ENCODE measurements at regions of chr18 and their contacts with region 1.

Region 1: DNA sequence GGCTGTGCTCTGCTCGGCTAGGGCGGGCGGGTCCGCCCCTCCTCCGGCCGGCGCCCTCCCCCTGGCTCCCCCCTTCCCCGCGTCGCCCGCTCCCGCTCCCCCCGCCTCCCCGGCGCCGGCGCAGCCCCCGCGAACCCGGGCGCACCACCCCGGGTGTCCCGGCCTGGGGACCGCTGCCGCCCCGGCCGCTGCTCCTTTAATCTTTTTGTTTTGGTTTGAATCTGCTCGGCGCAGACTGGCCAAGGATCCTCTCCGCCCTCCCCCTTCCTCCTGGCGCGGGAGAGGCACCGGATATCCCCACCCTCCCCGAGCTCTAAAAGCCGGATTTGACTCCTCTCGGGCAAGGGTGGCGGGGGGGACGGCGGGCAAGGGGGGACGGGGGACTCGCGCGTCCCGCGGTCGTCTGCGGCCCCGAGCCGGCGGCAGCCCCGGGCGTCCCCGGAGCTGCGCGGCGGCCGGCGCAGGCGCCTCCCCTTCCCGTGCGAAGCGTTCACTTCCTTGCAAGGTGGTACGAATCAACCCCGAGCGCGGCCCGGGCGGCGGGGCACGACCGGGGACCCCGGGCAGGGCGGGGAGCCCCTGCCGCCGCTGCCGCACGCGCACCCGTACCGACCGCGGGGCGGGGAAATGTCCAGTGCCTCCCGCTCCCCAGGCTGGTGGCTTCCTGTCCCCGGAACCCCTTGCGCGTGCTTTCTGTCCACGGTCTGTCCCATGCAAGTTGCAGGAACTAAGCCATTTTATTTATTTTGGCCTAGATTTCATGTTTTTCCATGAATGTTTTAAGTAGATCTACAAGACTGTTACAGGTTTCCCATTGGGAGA is at the start of gene PTGR3:
- DNase-seq: peak; percentile 82 to 89
- ATAC-seq: peak; percentile 51 to 65
- H3K4me3 ChIP-seq: peak within 1 kb of the TSS; percentile 75 to 97 (median 87)
- H3K27ac ChIP-seq: peak within 1 kb of the TSS; percentile 95 to 99 (median 96)
- H3K4me1 ChIP-seq: peaks cover 48% of the 10 kb centered on the region in 2 donors
- H3K27me3 ChIP-seq: no peaks in the 10 kb centered on the region
- CTCF ChIP-seq: no peak
- POLR2A ChIP-seq: peak; percentile 60 to 75
- total RNA-seq, gene PTGR3: 25.7 to 34.0 (median 29.9) TPM

Region 2: DNA sequence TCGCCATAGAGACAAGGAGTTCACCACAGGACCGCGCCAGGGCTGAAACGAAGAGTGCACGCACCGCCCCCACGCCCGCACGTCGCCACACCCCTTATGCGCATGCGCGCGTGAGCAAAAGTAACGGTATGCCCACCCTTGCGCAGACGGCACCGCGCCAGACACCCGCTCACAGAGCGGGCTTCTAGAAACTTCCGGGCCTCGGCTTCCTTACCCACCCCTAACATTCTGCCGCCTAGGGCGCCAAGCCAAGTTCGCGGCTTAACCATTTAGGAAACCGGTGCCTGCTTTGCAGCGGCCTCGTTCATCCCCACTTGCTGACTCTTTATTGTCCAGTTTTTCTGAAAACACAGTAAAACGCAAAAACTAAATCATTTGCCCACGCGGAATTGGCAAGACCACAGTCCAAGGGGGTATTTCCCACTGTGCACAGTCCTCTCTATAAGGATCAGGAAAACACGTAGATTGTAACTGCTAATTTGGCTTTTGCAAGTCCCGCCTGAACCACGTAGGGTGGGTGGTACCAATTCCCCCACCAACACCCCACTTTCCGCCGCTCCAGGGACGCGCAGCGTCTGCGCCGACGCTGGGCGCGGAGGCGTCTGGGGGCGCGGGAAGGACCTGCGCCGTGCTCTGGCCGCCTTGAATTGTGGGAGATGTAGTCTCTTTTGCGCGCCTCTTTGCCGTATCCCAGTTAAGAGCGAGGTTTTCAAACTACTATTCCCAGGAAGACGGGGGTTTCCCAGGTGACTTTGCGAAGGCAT is 1061.4 kb before region 1 on chr18 and contains the starts of genes FBXO15 and TIMM21:
- in situ Hi-C with region 1: no loop called
- intact Hi-C with region 1: loop called (anchors 10 kb)
- DNase-seq: peak; percentile 94 to 97
- ATAC-seq: peak; percentile 97 to 98
- H3K4me3 ChIP-seq: peak within 1 kb of the TSS; percentile 63 to 95 (median 81)
- H3K27ac ChIP-seq: peak within 1 kb of the TSS; percentile 89 to 94 (median 92)
- H3K4me1 ChIP-seq: peaks cover 30 to 45% of the 10 kb centered on the region in 2 donors
- H3K27me3 ChIP-seq: no peaks in the 10 kb centered on the region
- CTCF ChIP-seq: no peak
- POLR2A ChIP-seq: peak; percentile 79 to 85
- total RNA-seq, gene FBXO15: not detected
- total RNA-seq, gene TIMM21: 40.0 to 108 (median 75.8) TPM

Region 3: DNA sequence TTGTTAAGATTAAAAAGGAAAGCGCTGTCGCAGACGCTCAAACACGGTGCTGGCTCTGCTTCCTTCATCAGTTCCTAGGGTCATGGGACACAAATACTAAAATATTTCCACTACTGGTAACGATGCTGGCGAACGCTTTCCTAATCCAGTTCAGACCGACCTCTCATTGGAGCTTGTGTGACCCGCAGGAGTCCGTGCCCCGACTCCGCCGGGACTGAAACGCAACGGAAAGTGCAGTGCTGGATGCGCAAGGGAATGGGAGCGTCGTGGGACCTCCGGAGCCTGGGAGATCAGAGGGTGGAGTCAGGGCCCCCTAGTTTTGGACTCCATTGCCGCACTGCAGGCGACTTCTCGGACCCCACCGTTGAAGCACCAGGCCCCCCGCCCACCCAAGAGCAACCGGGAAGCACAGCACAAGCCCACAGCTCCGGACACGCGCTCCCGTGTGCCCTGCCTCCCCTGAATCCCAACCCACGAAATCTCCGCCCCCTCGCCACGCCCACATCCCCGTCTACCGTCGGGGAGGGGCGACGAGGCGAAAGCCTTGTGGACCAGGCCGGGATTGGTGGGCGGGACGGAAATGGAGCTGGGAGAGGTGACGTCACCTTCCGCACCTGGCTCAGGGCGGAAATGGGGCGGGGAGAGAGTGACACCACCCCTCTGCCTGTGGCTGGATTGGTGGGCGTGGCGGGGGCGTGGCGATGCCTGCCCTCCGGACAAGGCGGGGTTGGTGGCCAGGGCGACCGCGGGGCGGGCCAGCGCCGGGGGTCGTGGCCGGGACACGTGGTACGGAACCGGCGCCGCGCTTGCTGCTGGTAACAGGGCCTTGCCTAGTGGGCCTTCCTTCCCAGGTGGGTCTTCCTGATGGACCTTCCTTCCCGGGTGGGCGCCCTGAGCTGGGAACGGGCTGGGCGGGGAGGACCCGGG is 713.5 kb before region 1 on chr18 and contains the start of gene CNDP2:
- in situ Hi-C with region 1: no loop called
- intact Hi-C with region 1: loop called (anchors 2 kb)
- DNase-seq: peak; percentile 99
- ATAC-seq: peak; percentile 97 to 99
- H3K4me3 ChIP-seq: peak within 1 kb of the TSS; percentile 68 to 96 (median 82)
- H3K27ac ChIP-seq: peak within 1 kb of the TSS; percentile 78 to 90 (median 88)
- H3K4me1 ChIP-seq: peaks cover 9 to 13% of the 10 kb centered on the region in 2 donors
- H3K27me3 ChIP-seq: no peaks in the 10 kb centered on the region
- CTCF ChIP-seq: no peak
- POLR2A ChIP-seq: peak; percentile 70 to 77
- total RNA-seq, gene CNDP2: 29.5 to 82.8 (median 31.6) TPM

Region 4: DNA sequence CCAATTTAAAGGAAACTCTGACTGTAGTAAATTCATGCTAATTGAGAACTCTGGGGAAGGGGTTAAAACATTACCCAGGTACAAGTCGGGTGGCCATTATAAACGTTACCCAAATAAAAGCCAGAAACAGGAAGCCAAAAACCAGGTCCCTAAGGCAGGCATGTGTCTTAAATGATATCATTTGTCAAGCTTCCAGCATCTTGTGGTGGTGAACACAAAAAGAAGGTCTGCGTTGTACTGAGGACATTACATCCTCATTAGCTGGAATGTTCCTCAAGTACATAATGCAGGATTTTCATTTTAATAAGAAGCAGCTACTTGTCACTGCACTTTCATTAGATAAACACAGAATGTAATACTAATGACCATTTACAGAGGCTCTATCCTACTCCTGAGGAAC is 11.3 kb before region 1 on chr18:
- in situ Hi-C with region 1: no loop called
- intact Hi-C with region 1: loop called (anchors 2 kb)
- DNase-seq: no peak
- ATAC-seq: no peak
- H3K4me3 ChIP-seq: no peak overlapping the region
- H3K27ac ChIP-seq: no peak overlapping the region
- H3K4me1 ChIP-seq: peaks cover 46 to 52% of the 10 kb centered on the region in 2 donors
- H3K27me3 ChIP-seq: no peaks in the 10 kb centered on the region
- CTCF ChIP-seq: no peak
- POLR2A ChIP-seq: no peak

Region 5: GRCh38 chr18:76259096-76259495 is 1049.8 kb after region 1 on chr18:
- in situ Hi-C with region 1: no loop called
- intact Hi-C with region 1: no loop called
- DNase-seq: no peak
- ATAC-seq: no peak
- H3K4me3 ChIP-seq: no peak overlapping the region
- H3K27ac ChIP-seq: no peak overlapping the region
- H3K4me1 ChIP-seq: no peaks in the 10 kb centered on the region
- H3K27me3 ChIP-seq: peaks cover 3 to 10% (median 8%) of the 10 kb centered on the region in 3 donors
- CTCF ChIP-seq: no peak
- POLR2A ChIP-seq: no peak

Region 6: DNA sequence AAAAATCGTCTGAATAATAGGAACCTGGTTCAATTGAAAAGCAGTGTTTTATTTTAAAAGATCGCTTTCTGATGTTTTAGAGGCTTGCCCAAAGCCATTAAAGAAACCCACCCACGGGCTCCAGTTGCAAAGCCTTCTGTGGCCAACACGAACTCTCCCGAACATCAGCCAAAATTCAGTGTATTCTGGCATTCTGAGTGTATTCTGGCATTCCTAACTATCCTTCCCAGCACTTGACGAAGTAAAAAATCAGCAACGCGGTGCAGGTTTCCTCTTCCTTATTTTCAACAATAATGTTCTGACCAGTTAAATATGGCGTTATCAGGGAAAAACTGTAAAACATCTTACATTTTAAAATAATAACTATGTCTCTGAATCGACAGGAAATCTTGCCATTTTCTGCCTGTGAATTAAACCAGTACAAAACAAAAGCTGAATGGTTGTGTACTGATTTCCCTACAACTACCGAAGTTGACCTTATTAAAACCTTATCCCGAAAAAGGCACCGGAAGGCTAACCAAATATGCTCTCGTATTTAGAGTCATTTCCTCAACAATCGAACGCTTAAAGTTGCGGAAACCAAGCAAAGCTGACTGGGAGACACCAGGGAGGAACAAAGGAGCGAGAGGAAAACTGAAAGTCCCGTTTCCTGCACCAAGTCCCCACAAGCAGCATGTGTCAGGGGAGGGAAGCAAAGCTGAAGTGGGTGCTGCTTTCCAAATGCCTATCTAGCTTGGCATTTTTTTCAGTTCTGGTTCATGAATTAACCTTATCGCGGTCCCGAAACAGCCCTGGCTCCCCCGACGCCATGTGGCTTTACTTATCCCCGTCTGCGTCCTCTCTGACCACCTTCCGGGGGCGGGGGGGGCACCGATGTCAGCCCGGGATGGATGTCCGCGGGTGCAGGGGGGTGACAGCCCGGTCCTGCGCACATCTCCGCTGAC is 1241.4 kb after region 1 on chr18:
- in situ Hi-C with region 1: no loop called
- intact Hi-C with region 1: loop called (anchors 10 kb)
- DNase-seq: peak; percentile 55 to 77
- ATAC-seq: peak; percentile 51 to 64
- H3K4me3 ChIP-seq: peak overlapping the region; percentile 70 to 85 (median 76)
- H3K27ac ChIP-seq: peak overlapping the region; percentile 85 to 92 (median 92)
- H3K4me1 ChIP-seq: peaks cover 66 to 72% of the 10 kb centered on the region in 2 donors
- H3K27me3 ChIP-seq: no peaks in the 10 kb centered on the region
- CTCF ChIP-seq: no peak
- POLR2A ChIP-seq: peak; percentile 26 to 51

Measured in gastrocnemius medialis (tissue), 4 donors.